HAP-1 (cell line): ENCODE measurements at regions of chr19 and their contacts with region 1.

Region 1: GRCh38 chr19:50376166-50377050 is at the start of gene NR1H2:
- DNase-seq: peak; percentile 92 to 95
- H3K4me3 ChIP-seq: peak within 1 kb of the TSS; percentile 97
- H3K4me1 ChIP-seq: peaks cover 2% of the 10 kb centered on the region
- H3K27me3 ChIP-seq: no peaks in the 10 kb centered on the region

Region 2: GRCh38 chr19:50147462-50148423 is 228.7 kb before region 1 on chr19:
- in situ Hi-C with region 1: no loop called
- DNase-seq: peak; percentile 77 to 88
- H3K4me3 ChIP-seq: peak overlapping the region; percentile 50
- H3K4me1 ChIP-seq: no peaks in the 10 kb centered on the region
- H3K27me3 ChIP-seq: no peaks in the 10 kb centered on the region

Region 3: DNA sequence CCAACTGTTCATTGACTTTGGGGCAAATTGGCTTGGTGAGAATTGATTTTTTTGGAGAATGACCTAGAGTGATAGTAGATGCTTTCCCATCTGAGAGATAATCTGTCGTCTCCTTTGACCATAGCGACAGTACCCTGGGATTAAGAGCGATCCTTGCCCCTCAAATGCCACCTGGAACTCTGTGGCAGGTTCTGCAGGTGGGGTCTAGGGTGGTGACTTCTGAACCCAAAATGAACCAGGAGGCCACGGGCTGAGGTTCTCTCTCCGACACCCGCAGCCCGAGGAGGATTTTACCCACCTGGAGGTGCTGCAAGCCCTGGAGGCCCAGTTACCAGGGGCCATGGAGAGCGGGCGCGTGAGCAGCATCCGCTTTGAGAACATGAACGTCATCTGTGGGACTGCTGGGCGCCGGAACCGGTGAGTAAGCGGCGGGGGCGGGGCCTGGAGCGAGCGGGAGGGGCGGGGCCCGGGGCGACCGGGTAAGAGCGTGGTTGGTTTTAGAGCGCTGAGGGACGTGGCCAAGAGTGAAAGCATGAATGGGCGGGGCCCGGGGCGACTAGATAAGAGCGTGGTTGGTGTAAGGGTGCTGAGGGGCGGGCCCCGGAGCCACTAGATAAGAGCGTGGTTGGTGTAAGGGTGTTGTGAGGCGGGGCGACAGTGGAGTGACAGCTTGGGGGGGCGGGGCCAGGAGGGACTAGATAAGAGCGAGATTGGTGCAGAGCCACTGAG is 281.5 kb after region 1 on chr19:
- in situ Hi-C with region 1: no loop called
- DNase-seq: peak; percentile 57 to 92
- H3K4me3 ChIP-seq: peak overlapping the region; percentile 16
- H3K4me1 ChIP-seq: peaks cover 4% of the 10 kb centered on the region; the same call in 1 of the 2 replicates
- H3K27me3 ChIP-seq: no peaks in the 10 kb centered on the region

Region 4: GRCh38 chr19:50777754-50778303 is 401.4 kb after region 1 on chr19:
- in situ Hi-C with region 1: loop called (anchors 10 kb)
- DNase-seq: peak; percentile 39 to 54
- H3K4me3 ChIP-seq: no peak overlapping the region
- H3K4me1 ChIP-seq: no peaks in the 10 kb centered on the region; the same call in 1 of the 2 replicates
- H3K27me3 ChIP-seq: peaks cover 39% of the 10 kb centered on the region